ENCODE measurements at regions of chr14 and their contacts with region 1.

Region 1: GRCh38 chr14:25400607-25401206 is 350.8 kb upstream of the STXBP6 start:
- DNase-seq: peak; percentile 25
- H3K4me3 Mint-ChIP-seq: no peak overlapping the region
- H3K27ac Mint-ChIP-seq: no peak overlapping the region
- H3K4me1 Mint-ChIP-seq: no peaks in the 10 kb centered on the region
- H3K27me3 Mint-ChIP-seq: no peaks in the 10 kb centered on the region

Region 2: GRCh38 chr14:25381464-25381863 is 19.2 kb before region 1 on chr14:
- CTCF ChIA-PET with region 1: interaction called, 11 read pairs
- POLR2A ChIA-PET with region 1: no interaction called
- intact Hi-C with region 1: no loop called
- DNase-seq: no peak
- H3K4me3 Mint-ChIP-seq: no peak overlapping the region
- H3K27ac Mint-ChIP-seq: no peak overlapping the region
- H3K4me1 Mint-ChIP-seq: no peaks in the 10 kb centered on the region
- H3K27me3 Mint-ChIP-seq: no peaks in the 10 kb centered on the region

Region 3: GRCh38 chr14:25411781-25412757 is 11.4 kb after region 1 on chr14:
- CTCF ChIA-PET with region 1: interaction called, 13 read pairs
- POLR2A ChIA-PET with region 1: no interaction called
- intact Hi-C with region 1: no loop called
- DNase-seq: no peak
- H3K4me3 Mint-ChIP-seq: no peak overlapping the region
- H3K27ac Mint-ChIP-seq: no peak overlapping the region
- H3K4me1 Mint-ChIP-seq: no peaks in the 10 kb centered on the region
- H3K27me3 Mint-ChIP-seq: no peaks in the 10 kb centered on the region